SK-N-SH (cell line): ENCODE measurements at regions of chr1 and their contacts with region 1.

Region 1: GRCh38 chr1:21573971-21574465 is 64.8 kb downstream of the ALPL start:
- DNase-seq: peak; percentile 85
- H3K4me3 ChIP-seq: no peak overlapping the region
- H3K27ac ChIP-seq: no peak overlapping the region
- H3K4me1 ChIP-seq: peaks cover 0 to 5% of the 10 kb centered on the region in 2 experiments; a peak in 2 of 4 replicates
- H3K27me3 ChIP-seq: no peaks in the 10 kb centered on the region
- CTCF ChIP-seq: peak; percentile 78
- EP300 ChIP-seq: no peak
- RAD21 ChIP-seq: peak; percentile 92

Region 2: GRCh38 chr1:21508580-21509350 is 65.3 kb before region 1 on chr1:
- CTCF ChIA-PET with region 1: interaction called, 13 read pairs
- POLR2A ChIA-PET with region 1: no interaction called
- DNase-seq: peak; percentile 97
- H3K4me3 ChIP-seq: no peak overlapping the region
- H3K27ac ChIP-seq: no peak overlapping the region
- H3K4me1 ChIP-seq: peaks cover 7 to 9% of the 10 kb centered on the region in 2 experiments; a peak in 2 of 4 replicates
- H3K27me3 ChIP-seq: no peaks in the 10 kb centered on the region; the same call in 1 of the 2 replicates
- CTCF ChIP-seq: peak; percentile 55
- EP300 ChIP-seq: no peak
- RAD21 ChIP-seq: peak; percentile 58

Region 3: GRCh38 chr1:21696931-21697330 is 122.9 kb after region 1 on chr1:
- CTCF ChIA-PET with region 1: no interaction called
- POLR2A ChIA-PET with region 1: no interaction called
- DNase-seq: no peak
- H3K4me3 ChIP-seq: no peak overlapping the region
- H3K27ac ChIP-seq: no peak overlapping the region
- H3K4me1 ChIP-seq: no peaks in the 10 kb centered on the region
- H3K27me3 ChIP-seq: no peaks in the 10 kb centered on the region
- CTCF ChIP-seq: no peak
- EP300 ChIP-seq: no peak
- RAD21 ChIP-seq: no peak